ENCODE measurements at regions of chr22 and their contacts with region 1.

Region 1: DNA sequence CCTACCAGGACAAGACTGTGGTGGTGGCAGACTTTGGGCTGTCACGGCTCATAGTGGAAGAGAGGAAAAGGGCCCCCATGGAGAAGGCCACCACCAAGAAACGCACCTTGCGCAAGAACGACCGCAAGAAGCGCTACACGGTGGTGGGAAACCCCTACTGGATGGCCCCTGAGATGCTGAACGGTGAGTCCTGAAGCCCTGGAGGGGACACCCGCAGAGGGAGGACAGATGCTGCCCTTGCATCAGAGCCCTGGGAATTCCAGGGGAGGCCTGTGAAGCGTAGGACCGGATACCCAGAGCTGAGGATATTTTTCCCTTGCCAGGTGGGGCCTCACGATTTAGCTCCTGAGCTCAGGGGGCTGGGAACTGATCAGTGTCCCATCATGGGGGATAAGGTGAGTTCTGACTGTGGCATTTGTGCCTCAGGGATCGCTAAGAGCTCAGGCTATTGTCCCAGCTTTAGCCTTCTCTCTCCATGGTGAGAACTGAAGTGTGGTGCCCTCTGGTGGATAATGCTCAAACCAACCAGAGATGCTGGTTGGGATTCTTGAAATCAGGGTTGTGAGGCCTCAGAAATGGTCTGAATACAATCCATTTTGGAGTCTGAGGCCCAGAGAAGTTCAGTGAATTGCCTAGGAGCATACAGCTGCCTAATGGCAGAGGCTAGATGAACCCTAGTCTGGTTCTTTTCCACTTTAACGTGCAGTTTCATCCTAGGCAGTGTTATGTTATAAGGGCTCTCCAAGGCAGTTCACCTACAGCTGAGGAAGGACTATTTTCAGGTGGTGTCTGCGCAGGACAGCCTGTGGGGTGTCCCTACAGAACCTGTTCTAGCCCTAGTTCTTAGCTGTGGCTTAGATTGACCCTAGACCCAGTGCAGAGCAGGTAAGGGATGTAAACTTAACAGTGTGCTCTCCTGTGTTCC is 19.5 kb downstream of the PIK3IP1 start:
- DNase-seq: peak; percentile 62
- H3K4me3 Mint-ChIP-seq: no peak overlapping the region
- H3K27ac Mint-ChIP-seq: no peak overlapping the region
- H3K4me1 Mint-ChIP-seq: peaks cover 24% of the 10 kb centered on the region
- H3K27me3 Mint-ChIP-seq: no peaks in the 10 kb centered on the region
- CTCF ChIP-seq: peak; percentile 73

Region 2: DNA sequence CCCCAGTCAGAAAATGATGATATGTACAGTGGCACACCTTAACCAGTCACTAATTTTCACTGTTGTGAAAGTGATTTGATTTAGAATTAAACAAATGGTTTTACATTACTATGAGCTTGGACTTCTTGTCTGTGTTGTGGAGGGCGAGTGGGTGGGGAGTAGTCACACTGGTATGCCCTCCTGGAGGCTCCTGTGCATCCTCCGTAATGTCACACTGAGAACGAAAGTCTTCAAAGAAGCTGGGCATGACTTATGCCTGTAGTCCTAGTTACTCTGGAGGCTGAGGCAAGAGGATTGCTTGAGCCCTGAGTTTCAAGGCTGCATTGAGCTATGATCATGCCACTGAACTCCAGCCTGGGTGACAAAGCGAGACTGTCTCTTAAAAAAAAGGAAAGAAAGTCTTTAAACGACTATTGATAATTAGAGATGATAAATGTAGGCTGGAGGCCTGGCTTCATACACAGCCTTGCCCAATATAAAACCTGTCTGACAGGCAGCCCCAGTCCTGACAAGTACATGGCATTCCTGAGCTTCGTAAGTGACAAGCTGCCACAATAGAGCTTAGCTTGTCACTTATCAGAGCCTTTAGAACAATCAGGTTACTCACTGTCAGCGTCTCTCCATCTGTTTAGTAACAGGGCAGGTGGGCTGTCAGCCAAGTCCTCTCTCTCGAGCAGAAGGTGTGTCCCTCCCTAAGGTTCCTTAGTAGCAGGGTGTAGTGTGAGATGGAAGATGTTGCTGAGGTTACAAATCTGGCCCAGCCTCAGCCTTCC is 65.7 kb before region 1 on chr22:
- CTCF ChIA-PET with region 1: interaction called, 15 read pairs
- intact Hi-C with region 1: no loop called
- DNase-seq: peak; percentile 77
- H3K4me3 Mint-ChIP-seq: no peak overlapping the region
- H3K27ac Mint-ChIP-seq: peak overlapping the region; percentile 67
- H3K4me1 Mint-ChIP-seq: peaks cover 40% of the 10 kb centered on the region
- H3K27me3 Mint-ChIP-seq: no peaks in the 10 kb centered on the region
- CTCF ChIP-seq: no peak

Region 3: DNA sequence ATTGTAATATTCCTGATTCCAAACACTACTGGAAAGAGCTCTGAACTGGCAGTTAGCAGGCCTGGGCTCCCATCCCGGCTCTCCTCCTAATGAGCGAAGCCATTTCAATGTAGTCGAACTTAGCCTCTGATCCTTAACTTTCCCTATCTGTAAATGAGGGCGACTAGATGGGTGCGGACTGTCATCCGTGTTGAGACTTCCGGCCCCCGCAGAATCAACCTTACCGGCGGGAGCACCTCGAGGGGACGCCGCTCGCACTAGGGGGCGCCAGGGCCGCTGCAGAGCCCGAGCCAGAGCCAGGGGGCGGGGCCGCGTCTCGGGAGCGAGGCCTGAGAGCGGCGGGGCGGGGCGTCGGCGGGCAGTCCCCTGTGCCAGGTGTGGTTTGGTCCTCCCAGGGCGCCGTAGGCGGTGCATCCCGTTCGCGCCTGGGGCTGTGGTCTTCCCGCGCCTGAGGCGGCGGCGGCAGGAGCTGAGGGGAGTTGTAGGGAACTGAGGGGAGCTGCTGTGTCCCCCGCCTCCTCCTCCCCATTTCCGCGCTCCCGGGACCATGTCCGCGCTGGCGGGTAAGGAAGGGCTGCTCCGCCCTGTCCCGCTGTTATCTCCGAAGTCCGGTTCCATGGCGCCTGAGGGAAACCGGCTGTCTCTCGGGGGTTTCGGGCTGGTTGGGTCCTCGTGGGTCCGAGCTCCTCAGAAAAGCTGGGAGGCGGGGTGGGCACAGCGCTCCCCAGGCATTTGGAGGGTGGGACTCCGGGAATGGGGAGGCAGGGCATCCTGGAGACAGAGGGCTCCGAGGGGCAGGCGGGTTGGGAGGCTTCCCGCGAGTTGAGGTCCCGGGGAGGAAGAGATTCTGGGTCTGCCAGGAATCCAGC is 60.7 kb before region 1 on chr22 and contains the start of gene LIMK2:
- CTCF ChIA-PET with region 1: interaction called, 15 read pairs
- intact Hi-C with region 1: no loop called
- DNase-seq: peak; percentile 99
- H3K4me3 Mint-ChIP-seq: peak within 1 kb of the TSS; percentile 85
- H3K27ac Mint-ChIP-seq: peak within 1 kb of the TSS; percentile 41
- H3K4me1 Mint-ChIP-seq: peaks cover 48% of the 10 kb centered on the region
- H3K27me3 Mint-ChIP-seq: no peaks in the 10 kb centered on the region
- CTCF ChIP-seq: peak; percentile 80
- total RNA-seq, gene LIMK2: 59.9 and 60.7 TPM in 2 replicates

Region 4: GRCh38 chr22:31290494-31291471 is 18.0 kb after region 1 on chr22:
- CTCF ChIA-PET with region 1: interaction called, 19 read pairs
- intact Hi-C with region 1: no loop called
- DNase-seq: peak; percentile 93
- H3K4me3 Mint-ChIP-seq: peak overlapping the region; percentile 68
- H3K27ac Mint-ChIP-seq: peak overlapping the region; percentile 55
- H3K4me1 Mint-ChIP-seq: peaks cover 20% of the 10 kb centered on the region
- H3K27me3 Mint-ChIP-seq: no peaks in the 10 kb centered on the region
- CTCF ChIP-seq: no peak

Region 5: GRCh38 chr22:31313366-31314147 is 40.8 kb after region 1 on chr22:
- CTCF ChIA-PET with region 1: interaction called, 10 read pairs
- intact Hi-C with region 1: no loop called
- DNase-seq: peak; percentile 86
- H3K4me3 Mint-ChIP-seq: peak overlapping the region; percentile 19
- H3K27ac Mint-ChIP-seq: peak overlapping the region; percentile 36
- H3K4me1 Mint-ChIP-seq: peaks cover 10% of the 10 kb centered on the region
- H3K27me3 Mint-ChIP-seq: no peaks in the 10 kb centered on the region
- CTCF ChIP-seq: peak; percentile 91